Heart right ventricle (tissue), 16 donors: ENCODE measurements at regions of chr13 and their contacts with region 1.

Region 1: DNA sequence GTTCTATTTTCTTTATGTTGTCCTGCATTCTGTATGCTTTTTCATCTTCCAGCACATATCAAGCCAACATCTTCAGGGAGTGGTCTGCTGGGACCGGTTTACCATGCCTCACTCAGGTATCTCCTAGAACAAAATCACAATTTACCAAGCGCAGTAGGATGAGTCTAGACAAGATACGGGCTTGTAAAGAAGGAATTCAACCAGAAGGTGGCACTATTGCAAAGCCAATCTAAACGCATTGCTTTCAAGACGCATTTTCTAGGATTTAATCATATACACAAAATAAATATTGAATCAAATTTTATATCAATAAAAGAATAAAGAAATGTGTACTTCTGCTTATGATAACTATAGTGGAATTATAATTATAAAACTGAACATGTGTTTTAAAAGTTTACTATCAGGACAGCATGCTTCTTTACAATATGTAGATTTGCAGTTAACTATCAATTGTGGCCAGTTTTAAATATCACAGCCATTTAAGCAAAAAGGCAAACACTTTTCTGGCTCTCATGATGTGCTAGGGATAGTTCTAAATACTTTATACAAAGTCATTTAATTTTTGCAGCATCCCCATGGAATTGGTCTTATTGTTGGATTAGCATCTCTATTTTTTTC is 16.1 kb upstream of the TPP2 start:
- DNase-seq: peak in 1 of 2 donors; percentile 38
- ATAC-seq: peak in 6 of 8 donors; percentile 60 to 74 (median 68)
- H3K4me3 ChIP-seq: no peak overlapping the region
- H3K27ac ChIP-seq: no peak overlapping the region
- H3K4me1 ChIP-seq: peaks cover 0 to 7% (median 0%) of the 10 kb centered on the region in 9 donors
- H3K27me3 ChIP-seq: peaks cover 0 to 19% (median 0%) of the 10 kb centered on the region in 7 donors
- CTCF ChIP-seq: peak; percentile 30 to 87 (median 81)

Region 2: DNA sequence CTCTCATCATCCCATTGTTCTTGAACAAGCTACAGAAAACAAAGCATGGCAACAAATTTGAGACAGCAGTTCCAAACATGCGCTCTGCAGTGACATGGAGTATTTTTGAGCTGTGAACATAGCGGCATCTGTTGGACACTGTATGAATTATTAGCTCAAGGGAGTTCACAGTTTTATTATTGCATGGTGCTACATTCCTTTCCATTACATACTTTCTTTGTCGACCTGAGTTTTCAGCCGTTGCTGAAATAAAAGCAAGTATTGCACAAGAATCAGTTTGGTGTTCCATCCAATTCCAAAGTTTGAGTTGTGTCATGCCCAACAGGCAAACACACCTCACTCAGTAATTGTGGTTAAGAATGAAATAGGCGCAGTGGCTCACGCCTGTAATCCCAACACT is 144.3 kb after region 1 on chr13:
- intact Hi-C with region 1: loop called in 6 of 10 experiments (anchors 5 to 10 kb)
- DNase-seq: no peak
- ATAC-seq: peak in 3 of 8 donors; percentile 48 to 70 (median 63)
- H3K4me3 ChIP-seq: no peak overlapping the region
- H3K27ac ChIP-seq: no peak overlapping the region
- H3K4me1 ChIP-seq: peaks cover 0 to 6% (median 0%) of the 10 kb centered on the region in 9 donors
- H3K27me3 ChIP-seq: no peaks in the 10 kb centered on the region
- CTCF ChIP-seq: peak in 7 of 9 donors; percentile 12 to 44 (median 38)

Region 3: DNA sequence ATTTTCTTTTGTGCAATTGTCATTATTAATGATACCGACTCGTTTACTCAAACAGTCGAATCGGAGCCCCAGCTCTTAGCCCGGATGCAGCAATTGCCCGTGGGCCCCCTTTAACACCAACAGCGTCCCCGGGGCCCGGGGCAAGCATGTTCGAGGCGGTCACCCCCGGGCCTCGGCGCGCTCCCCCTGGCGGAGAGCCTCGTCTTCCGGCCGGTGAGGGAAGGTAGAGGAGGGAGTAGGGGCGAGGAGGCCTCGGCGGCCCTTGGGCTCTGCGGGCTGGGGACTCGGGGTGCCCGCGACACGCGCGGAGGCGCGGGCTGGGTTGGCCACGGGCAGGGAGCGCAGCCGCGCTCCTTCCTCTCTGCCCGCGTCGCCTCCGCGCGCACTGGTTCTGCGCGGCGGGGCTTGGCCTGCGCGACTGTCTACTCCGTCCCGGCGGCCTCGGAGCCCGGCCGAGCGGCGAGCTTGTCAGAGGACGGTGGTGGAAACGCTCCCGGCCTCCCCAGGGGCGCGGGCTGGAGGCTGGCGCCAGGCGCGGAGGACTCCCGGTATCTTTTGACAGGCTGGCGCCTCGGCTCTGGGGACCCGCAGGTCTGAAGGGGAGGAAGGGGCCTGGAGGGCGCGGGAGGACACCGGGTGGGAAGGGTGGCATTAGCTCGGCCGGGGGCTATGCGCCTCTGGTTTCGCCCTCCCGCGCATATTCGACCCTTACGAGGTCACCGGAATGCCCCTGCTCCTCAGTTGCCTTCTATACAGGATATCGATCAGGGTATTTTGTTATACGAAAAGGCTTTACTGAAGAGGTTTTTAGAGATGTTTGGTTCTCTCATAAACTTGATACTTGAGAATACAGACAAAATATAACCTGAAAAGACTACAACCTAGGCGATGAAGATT is 219.7 kb after region 1 on chr13:
- intact Hi-C with region 1: loop called in 1 of 10 experiments (anchors 5 kb)
- DNase-seq: peak; percentile 86 to 88
- ATAC-seq: peak; percentile 80 to 90 (median 88)
- H3K4me3 ChIP-seq: peak overlapping the region; percentile 73 to 99 (median 84)
- H3K27ac ChIP-seq: peak overlapping the region; percentile 78 to 95 (median 90)
- H3K4me1 ChIP-seq: peaks cover 0 to 57% (median 35%) of the 10 kb centered on the region in 9 donors
- H3K27me3 ChIP-seq: peaks cover 0 to 26% (median 0%) of the 10 kb centered on the region in 7 donors
- CTCF ChIP-seq: peak; percentile 76 to 92 (median 80)

Region 4: DNA sequence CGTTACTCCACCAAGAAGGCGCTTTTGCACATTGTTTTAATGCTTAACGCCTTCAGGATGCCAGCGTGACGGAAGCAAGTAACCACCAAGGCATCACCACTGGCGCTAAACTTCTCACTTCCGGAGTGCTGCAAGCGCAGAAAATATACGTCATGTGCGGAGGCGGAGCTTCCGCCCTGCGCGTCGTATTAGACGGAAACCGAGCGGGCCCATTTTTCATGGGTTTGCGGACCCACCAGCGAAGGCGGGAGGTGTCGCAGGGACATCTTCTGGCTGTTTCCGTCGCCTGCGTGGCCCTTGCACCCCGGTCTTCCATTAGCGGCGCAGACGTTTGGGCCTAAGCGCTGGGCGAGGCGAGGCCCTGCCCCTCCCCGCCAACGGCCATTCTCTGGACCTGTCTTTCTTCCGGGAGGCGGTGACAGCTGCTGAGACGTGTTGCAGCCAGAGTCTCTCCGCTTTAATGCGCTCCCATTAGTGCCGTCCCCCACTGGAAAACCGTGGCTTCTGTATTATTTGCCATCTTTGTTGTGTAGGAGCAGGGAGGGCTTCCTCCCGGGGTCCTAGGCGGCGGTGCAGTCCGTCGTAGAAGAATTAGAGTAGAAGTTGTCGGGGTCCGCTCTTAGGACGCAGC is 265.1 kb after region 1 on chr13 and contains the start of gene ERCC5:
- intact Hi-C with region 1: loop called in 5 of 10 experiments (anchors 1 to 5 kb)
- DNase-seq: peak; percentile 93 to 96
- ATAC-seq: peak; percentile 93 to 97 (median 95)
- H3K4me3 ChIP-seq: peak within 1 kb of the TSS; percentile 76 to 98 (median 88)
- H3K27ac ChIP-seq: peak within 1 kb of the TSS; percentile 88 to 98 (median 95)
- H3K4me1 ChIP-seq: peaks cover 0 to 37% (median 28%) of the 10 kb centered on the region in 9 donors
- H3K27me3 ChIP-seq: no peaks in the 10 kb centered on the region
- CTCF ChIP-seq: peak in 1 of 9 donors; percentile 12
- total RNA-seq, gene ERCC5: 26.5 to 37.7 (median 33.4) TPM

Region 5: DNA sequence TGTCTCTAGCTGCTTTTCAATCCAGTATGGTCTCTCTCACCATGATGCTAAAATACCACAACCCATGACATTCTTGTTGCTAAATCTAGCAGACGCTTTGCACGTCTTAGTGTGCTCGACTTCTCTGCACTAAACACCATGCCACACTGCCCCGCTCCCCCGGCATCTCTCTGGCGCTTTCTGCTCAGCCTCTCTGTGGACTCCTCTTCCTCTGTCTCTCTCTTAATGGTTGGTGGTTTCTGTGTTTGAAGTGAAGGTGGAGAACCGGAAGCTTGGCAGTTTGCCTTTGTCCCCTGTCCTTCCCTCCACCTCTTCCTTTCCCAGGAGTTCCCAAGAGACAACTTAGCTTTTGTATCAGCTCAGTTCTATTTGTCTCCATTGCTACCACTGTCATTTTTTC is 274.0 kb after region 1 on chr13:
- intact Hi-C with region 1: loop called in 3 of 10 experiments (anchors 2 to 5 kb)
- DNase-seq: no peak
- ATAC-seq: no peak
- H3K4me3 ChIP-seq: no peak overlapping the region
- H3K27ac ChIP-seq: peak overlapping the region in 1 of 10 donors; percentile 6
- H3K4me1 ChIP-seq: peaks cover 0 to 19% (median 6%) of the 10 kb centered on the region in 9 donors
- H3K27me3 ChIP-seq: no peaks in the 10 kb centered on the region
- CTCF ChIP-seq: no peak